RWPE1 (cell line): ENCODE measurements at regions of chr9 and their contacts with region 1.

Region 1: DNA sequence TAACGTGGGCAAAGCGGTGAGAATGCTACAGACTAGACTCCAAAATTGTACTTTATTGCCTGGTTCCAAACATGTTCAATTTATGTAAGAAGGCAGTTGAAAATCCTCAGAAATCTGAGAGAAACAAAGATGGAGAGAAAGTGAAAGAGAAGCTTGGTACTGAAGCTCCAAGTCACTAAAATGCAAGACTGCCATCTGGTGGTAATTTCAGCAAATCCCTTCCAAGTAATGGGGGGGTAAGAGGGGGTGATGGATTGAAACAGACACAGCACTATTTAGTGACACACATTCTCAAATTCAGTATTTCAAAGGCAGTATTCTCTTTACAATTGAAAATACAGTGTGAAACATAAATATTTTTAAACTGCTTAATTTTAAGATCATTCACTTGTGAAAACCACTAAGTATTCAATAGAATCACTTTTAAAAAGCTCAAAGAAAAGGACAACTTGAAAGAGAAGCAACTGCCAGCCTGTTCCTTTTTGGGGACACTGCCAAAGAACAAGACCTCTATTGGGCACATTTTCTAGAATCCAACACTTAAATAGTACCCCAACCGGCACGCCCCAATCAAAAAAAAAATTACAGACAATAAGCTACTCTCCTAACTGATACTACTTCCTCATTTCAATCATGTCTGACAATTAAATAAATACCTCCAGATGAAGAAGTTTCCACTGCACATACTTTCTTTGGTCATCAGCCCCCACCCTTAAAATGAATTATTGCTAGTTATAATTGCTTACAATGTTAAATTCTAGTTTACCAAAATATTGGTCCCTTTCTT is 131.5 kb downstream of the AGTPBP1 start:
- DNase-seq: peak; percentile 92
- H3K27ac ChIP-seq: no peak overlapping the region
- CTCF ChIP-seq: peak; percentile 83

Region 2: DNA sequence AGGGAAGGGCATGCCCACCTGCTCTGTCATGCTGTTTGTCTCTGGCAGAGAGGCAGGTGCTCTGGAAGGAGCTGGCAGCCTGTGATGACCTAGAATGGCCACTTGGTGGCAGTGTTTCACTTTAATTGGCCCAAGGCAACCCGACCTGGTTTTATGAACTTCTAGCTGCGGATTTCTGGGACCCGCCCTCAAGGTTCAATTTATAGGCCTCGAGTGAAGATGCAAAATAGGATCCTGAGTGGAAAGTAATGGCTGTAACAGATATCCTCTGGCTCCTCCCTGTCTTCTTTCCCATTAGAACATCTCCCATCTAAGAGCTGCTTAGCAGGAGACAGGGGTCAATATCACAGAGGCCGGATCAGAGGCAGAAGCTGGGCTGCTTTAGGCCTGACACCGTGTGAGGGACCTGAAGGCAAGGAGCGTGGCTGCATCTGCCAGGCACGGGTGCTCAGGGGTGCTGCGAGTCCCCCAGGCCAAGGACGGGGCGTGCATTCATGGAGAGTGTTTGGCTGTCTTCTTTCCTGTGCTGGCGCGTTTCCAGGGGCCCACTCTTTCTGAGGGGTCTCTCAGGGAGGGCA is 1213.0 kb before region 1 on chr9:
- CTCF ChIA-PET with region 1: interaction called, 10 read pairs
- POLR2A ChIA-PET with region 1: no interaction called
- DNase-seq: peak; percentile 79
- H3K27ac ChIP-seq: no peak overlapping the region
- CTCF ChIP-seq: peak; percentile 79

Region 3: DNA sequence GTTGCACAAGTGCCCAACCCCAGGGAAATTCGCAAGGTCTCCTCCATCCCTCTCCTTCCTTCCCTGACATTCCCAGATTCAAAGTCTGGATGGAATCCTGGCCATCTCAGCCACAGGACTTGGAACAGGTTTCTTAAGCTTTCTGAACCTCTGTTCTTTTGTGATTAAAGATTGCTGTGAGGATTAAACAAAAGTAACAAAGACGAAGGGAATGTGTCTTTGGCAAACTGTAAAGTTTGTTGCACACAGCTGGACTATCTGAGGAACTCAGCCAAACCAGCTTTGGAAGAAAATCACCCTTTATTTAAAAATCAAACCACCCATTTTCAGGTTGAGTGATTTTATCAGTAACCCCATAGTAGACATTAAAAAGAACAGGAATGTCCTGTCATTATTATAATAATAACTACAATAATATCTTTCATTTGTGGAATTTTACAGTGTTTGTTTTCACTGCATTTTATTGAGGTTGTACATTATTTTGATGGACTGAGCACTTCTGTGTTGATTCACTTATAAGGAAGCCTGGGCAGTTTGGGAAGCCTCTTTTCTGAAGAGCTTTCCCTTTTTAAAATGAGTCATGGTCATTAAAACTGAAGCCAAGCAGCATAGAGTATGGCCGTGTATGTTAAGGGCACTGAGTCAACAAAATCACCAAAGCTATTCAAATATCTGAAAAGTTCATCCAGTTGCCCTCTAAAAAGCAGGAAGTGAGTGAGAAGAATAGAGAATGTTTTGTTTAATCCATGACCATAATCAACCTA is 178.7 kb before region 1 on chr9:
- CTCF ChIA-PET with region 1: interaction called, 12 read pairs
- POLR2A ChIA-PET with region 1: no interaction called
- DNase-seq: peak; percentile 26
- H3K27ac ChIP-seq: no peak overlapping the region
- CTCF ChIP-seq: no peak

Region 4: DNA sequence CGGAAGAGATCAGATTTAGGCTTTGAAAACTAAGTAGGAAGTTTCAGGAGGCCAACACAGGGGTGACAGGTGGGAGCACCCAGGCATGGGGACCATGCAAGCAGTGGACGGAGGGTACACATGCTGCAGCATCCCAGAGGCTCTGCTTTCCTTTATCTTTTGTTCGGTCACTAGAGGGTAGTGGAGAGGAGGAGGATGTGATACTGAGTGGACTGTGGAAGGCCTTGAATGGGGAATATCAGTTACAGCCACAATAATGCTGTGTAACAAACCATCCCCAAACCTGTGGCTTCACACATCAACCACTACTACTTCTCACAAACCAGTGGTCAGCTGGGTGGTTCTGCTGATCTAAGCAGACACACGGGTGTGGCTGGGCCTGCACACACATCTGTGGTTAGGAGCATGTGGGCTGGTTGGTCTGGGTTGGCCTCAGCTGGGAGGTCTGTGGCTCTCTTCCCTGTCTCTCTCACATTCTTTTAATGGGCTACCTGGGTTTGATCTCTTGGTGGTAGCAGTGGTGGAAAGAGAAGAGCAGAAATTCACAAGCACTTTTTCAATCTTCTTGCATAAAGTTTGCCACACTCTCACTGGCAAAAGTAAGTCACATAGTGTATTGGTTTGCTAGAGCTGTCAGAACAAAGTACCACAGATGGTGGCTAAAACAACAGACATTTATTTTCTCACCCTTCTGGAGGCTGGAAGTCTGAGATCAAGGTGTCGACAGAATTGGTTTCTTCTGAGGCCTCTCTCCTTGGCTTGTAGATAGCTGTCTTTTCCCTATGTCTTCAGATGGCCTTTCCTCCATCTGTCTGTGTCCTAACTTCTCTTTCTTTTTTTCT is 107.2 kb before region 1 on chr9:
- CTCF ChIA-PET with region 1: interaction called, 11 read pairs
- POLR2A ChIA-PET with region 1: no interaction called
- DNase-seq: no peak
- H3K27ac ChIP-seq: no peak overlapping the region
- CTCF ChIP-seq: no peak

Region 5: GRCh38 chr9:85630676-85631075 is 20.4 kb after region 1 on chr9:
- CTCF ChIA-PET with region 1: interaction called, 10 read pairs
- POLR2A ChIA-PET with region 1: no interaction called
- DNase-seq: no peak
- H3K27ac ChIP-seq: no peak overlapping the region
- CTCF ChIP-seq: no peak

Region 6: DNA sequence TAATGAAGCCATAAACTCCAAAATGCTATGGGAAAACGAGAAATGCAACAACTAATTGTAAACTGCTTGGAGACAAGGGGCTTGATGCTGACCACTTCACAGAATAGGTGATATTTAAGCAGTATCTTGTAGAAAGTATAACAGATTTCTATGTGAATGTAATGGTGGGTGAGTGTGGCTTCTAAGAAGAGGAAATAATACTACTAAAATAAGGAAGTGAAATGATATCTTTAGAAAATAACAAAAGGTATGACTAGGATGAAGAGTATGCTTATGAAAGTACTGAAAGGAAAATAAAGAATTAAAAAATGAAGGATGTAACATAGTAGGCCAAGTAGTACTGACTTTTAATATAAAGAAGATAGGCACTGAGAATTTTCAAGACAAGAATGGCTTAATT is 37.3 kb after region 1 on chr9:
- CTCF ChIA-PET with region 1: no interaction called
- POLR2A ChIA-PET with region 1: no interaction called
- DNase-seq: no peak
- H3K27ac ChIP-seq: no peak overlapping the region
- CTCF ChIP-seq: no peak